ENCODE measurements at regions of chr10 and their contacts with region 1.

Region 1: DNA sequence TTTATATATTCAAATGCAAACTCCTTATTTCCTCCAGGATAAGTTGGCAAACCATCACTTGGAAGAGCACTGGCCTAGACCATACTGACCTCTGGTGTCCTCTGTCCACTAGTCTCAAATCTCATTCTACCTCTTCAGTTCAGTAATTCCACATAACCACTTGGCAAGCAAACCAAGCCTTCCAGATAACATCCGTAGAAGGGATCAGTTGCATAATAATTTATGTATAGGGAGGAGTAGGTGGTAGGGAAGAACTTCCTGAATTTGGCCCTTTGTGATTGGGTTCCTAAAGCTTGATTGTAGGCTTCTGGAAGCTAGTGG is 55.0 kb downstream of the WAC start:
- DNase-seq: no peak
- ATAC-seq: peak; percentile 52 to 82
- H3K4me3 ChIP-seq: no peak overlapping the region
- H3K27ac ChIP-seq: peak overlapping the region; percentile 39 to 60 (median 48)
- H3K4me1 ChIP-seq: peaks cover 27 to 34% of the 10 kb centered on the region in 2 donors
- H3K27me3 ChIP-seq: no peaks in the 10 kb centered on the region
- CTCF ChIP-seq: peak in 3 of 5 experiments; percentile 14 to 50 (median 25)
- POLR2A ChIP-seq: no peak

Region 2: GRCh38 chr10:28432210-28432676 is 155.7 kb before region 1 on chr10:
- in situ Hi-C with region 1: loop called in 3 of 4 experiments (anchors 25 kb)
- intact Hi-C with region 1: loop called (anchors 5 kb)
- DNase-seq: peak; percentile 27 to 38
- ATAC-seq: peak; percentile 62 to 75
- H3K4me3 ChIP-seq: no peak overlapping the region
- H3K27ac ChIP-seq: no peak overlapping the region
- H3K4me1 ChIP-seq: no peaks in the 10 kb centered on the region
- H3K27me3 ChIP-seq: no peaks in the 10 kb centered on the region
- CTCF ChIP-seq: peak; percentile 52 to 76 (median 65)
- POLR2A ChIP-seq: no peak

Region 3: GRCh38 chr10:28520346-28520745 is 67.6 kb before region 1 on chr10:
- in situ Hi-C with region 1: no loop called
- intact Hi-C with region 1: no loop called
- DNase-seq: no peak
- ATAC-seq: no peak
- H3K4me3 ChIP-seq: no peak overlapping the region
- H3K27ac ChIP-seq: no peak overlapping the region
- H3K4me1 ChIP-seq: no peaks in the 10 kb centered on the region
- H3K27me3 ChIP-seq: no peaks in the 10 kb centered on the region
- CTCF ChIP-seq: no peak
- POLR2A ChIP-seq: no peak

Region 4: GRCh38 chr10:28532383-28533175 is 55.4 kb before region 1 on chr10 and contains the start of gene WAC:
- in situ Hi-C with region 1: loop called in 1 of 4 experiments (anchors 10 kb)
- intact Hi-C with region 1: loop called (anchors 2 kb)
- DNase-seq: peak; percentile 92 to 94
- ATAC-seq: peak; percentile 91 to 93
- H3K4me3 ChIP-seq: peak within 1 kb of the TSS; percentile 78 to 99 (median 90)
- H3K27ac ChIP-seq: peak within 1 kb of the TSS; percentile 95 to 99 (median 98)
- H3K4me1 ChIP-seq: peaks cover 33 to 37% of the 10 kb centered on the region in 2 donors
- H3K27me3 ChIP-seq: no peaks in the 10 kb centered on the region
- CTCF ChIP-seq: peak in 3 of 5 experiments; percentile 14 to 17 (median 14)
- POLR2A ChIP-seq: peak in 1 of 2 donors; percentile 93
- total RNA-seq, gene WAC: 55.7 to 83.4 (median 69.6) TPM